ENCODE measurements at regions of chr19 and their contacts with region 1.

Region 1: DNA sequence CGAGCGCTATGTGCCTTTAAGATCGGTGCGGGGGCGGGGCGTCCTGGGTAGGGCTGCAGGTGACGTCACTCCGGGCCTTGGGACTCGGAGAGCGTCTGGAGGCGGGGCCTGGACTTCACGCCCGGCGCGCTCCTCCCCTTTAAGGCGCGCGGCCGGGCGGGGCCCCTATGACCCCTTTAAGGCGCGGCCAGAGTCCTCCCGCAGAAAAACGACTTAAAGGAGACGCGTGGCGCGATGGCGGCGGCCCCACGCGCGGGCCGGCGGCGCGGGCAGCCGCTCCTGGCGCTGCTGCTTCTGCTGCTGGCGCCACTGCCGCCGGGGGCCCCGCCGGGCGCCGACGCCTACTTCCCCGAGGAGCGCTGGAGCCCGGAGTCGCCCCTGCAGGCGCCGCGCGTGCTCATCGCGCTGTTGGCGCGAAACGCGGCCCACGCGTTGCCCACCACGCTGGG is at the start of gene COLGALT1:
- DNase-seq: peak; percentile 94
- H3K4me3 ChIP-seq: peak within 1 kb of the TSS; percentile 88 to 92 (median 89)
- H3K27ac ChIP-seq: peak within 1 kb of the TSS; percentile 88
- H3K4me1 ChIP-seq: peaks cover 41% of the 10 kb centered on the region
- H3K27me3 ChIP-seq: no peaks in the 10 kb centered on the region
- CTCF ChIP-seq: no peak
- POLR2A ChIP-seq: peak; percentile 71
- total RNA-seq, gene COLGALT1: 240 and 263 TPM in 2 replicates

Region 2: GRCh38 chr19:17021793-17022583 is 533.5 kb before region 1 on chr19:
- CTCF ChIA-PET with region 1: no interaction called
- POLR2A ChIA-PET with region 1: no interaction called
- dilution Hi-C with region 1: no loop called
- intact Hi-C with region 1: no loop called
- DNase-seq: peak; percentile 60
- H3K4me3 ChIP-seq: no peak overlapping the region
- H3K27ac ChIP-seq: no peak overlapping the region
- H3K4me1 ChIP-seq: peaks cover 4% of the 10 kb centered on the region
- H3K27me3 ChIP-seq: peaks cover 12 to 17% of the 10 kb centered on the region in 2 experiments
- CTCF ChIP-seq: no peak
- POLR2A ChIP-seq: no peak

Region 3: DNA sequence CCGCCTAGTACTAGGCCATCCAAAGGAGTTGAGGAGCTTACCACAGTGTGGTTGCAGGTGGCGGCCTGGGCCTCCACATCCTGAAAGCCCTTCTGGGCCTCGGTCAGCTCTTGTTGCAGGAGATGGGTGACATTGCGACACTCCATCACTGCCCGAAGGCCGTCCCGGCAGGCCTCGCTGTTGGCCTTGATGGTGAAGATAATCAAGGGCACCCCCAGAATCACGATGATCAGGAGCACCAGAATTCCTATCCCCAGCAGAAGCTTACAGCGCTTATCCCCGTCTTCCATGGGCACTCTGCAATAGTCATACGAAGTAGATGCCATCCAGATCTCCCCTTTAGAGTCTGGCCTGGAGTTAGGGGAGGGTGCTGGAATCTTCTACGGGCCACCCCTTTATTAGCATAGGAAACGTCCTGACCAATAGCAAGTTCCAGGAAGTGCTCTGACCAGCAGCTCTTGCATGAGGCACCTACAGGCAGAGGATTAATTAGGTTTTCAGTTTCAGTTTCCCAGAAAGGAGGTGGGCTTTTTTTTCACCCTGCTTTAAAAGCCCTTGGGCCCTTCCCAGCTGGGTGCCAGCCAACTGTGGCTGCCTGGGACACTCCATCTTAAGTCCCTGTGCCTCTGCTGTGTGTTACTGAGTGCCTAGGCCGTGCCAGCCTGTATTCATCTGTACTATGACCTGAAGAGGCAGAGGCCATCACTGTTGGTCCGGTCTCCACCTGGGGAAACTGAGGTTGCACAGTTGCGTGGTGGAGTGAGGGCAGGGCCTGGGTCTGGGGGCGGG is 150.1 kb before region 1 on chr19 and contains the start of gene BST2:
- CTCF ChIA-PET with region 1: no interaction called
- POLR2A ChIA-PET with region 1: no interaction called
- dilution Hi-C with region 1: no loop called
- intact Hi-C with region 1: loop called (anchors 10 kb)
- DNase-seq: peak; percentile 84
- H3K4me3 ChIP-seq: peak within 1 kb of the TSS in 2 of 3 experiments; percentile 20 to 44
- H3K27ac ChIP-seq: peak within 1 kb of the TSS; percentile 7
- H3K4me1 ChIP-seq: peaks cover 22% of the 10 kb centered on the region
- H3K27me3 ChIP-seq: no peaks in the 10 kb centered on the region
- CTCF ChIP-seq: no peak
- POLR2A ChIP-seq: peak; percentile 70
- total RNA-seq, gene BST2: 20.7 and 21.2 TPM in 2 replicates

Region 4: DNA sequence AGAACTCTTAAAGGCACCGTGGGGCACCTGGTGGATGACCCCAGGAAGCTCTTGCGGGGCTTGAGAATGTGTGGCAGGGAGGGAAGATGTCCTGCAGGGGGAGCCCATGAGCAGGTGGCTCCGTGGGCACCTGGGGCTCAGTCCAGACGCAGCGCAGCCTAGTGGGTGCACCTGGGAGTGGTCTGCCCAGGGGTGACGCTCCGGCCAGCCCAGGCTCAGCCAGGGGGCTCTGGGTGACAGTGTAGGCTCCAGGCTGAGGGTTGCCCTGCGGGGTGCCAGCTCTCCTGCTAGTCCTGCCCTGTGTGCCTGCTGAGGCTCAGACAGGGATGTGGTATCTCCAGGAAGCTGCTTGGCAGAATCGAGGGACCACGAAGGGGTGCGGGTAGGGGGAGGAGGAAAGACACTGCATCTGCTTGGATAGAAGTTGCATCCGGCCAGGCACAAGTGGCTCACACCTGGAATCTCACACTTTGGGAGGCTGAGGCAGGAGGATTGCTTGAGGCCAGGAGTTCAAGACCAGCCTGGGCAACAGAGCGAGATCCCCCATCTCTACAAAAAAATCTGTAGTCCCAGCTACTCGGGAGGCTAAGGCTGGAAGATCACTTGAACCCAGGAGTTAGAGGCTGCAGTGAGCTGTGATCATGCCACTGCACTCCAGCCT is 59.0 kb before region 1 on chr19:
- CTCF ChIA-PET with region 1: interaction called, 19 read pairs
- POLR2A ChIA-PET with region 1: interaction called, 6 read pairs
- dilution Hi-C with region 1: no loop called
- intact Hi-C with region 1: no loop called
- DNase-seq: peak; percentile 81
- H3K4me3 ChIP-seq: no peak overlapping the region
- H3K27ac ChIP-seq: no peak overlapping the region
- H3K4me1 ChIP-seq: peaks cover 12% of the 10 kb centered on the region
- H3K27me3 ChIP-seq: no peaks in the 10 kb centered on the region
- CTCF ChIP-seq: peak; percentile 99
- POLR2A ChIP-seq: no peak

Region 5: DNA sequence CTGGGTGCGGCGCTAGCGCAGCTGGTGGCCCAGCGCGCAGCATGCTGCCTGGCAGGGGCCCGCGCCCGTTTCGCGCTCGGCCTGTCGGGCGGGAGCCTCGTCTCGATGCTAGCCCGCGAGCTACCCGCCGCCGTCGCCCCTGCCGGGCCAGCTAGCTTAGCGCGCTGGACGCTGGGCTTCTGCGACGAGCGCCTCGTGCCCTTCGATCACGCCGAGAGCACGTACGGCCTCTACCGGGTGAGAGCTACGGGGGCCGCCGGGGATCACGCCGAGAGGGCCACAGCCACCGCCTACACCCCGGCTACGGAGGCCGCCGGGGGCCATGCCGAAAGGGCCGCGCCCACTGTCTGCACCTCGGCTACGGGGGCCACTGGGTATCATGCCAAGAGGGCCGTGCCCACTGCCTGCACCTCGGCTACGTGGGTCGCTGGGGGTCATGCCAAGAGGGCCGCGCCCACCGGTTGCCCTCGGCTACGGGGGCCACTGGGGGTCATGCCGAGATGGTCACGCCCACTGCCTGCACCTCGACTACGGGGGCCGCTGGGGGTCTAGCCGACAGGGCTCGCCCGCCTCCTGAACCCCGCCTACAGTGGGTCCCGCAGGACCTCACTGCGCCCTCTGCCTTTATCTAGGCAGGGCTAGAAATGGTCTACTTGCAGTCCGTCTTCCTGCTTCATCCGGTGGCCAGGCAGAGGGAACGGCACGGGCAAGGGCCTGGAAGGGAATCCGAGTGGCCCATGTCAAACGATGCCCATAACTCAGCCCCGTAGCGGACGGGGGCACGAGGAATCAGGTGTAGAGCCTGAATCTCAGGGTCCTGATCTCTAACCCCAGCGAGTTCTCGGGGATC is 43.6 kb before region 1 on chr19:
- CTCF ChIA-PET with region 1: interaction called, 7 read pairs
- POLR2A ChIA-PET with region 1: interaction called, 8 read pairs
- dilution Hi-C with region 1: no loop called
- intact Hi-C with region 1: loop called (anchors 1 kb)
- DNase-seq: peak; percentile 84
- H3K4me3 ChIP-seq: peak overlapping the region; percentile 81 to 82 (median 81)
- H3K27ac ChIP-seq: peak overlapping the region; percentile 69
- H3K4me1 ChIP-seq: peaks cover 13% of the 10 kb centered on the region
- H3K27me3 ChIP-seq: no peaks in the 10 kb centered on the region
- CTCF ChIP-seq: peak in 1 of 2 donors; percentile 14
- POLR2A ChIP-seq: no peak

Region 6: GRCh38 chr19:17539238-17540117 is 16.0 kb before region 1 on chr19:
- CTCF ChIA-PET with region 1: interaction called, 12 read pairs
- POLR2A ChIA-PET with region 1: no interaction called
- dilution Hi-C with region 1: no loop called
- intact Hi-C with region 1: loop called (anchors 1 kb)
- DNase-seq: peak; percentile 93
- H3K4me3 ChIP-seq: peak overlapping the region in 2 of 3 experiments; percentile 6 to 38
- H3K27ac ChIP-seq: no peak overlapping the region
- H3K4me1 ChIP-seq: peaks cover 7% of the 10 kb centered on the region
- H3K27me3 ChIP-seq: no peaks in the 10 kb centered on the region
- CTCF ChIP-seq: peak in 1 of 2 donors; percentile 67
- POLR2A ChIP-seq: no peak

Region 7: DNA sequence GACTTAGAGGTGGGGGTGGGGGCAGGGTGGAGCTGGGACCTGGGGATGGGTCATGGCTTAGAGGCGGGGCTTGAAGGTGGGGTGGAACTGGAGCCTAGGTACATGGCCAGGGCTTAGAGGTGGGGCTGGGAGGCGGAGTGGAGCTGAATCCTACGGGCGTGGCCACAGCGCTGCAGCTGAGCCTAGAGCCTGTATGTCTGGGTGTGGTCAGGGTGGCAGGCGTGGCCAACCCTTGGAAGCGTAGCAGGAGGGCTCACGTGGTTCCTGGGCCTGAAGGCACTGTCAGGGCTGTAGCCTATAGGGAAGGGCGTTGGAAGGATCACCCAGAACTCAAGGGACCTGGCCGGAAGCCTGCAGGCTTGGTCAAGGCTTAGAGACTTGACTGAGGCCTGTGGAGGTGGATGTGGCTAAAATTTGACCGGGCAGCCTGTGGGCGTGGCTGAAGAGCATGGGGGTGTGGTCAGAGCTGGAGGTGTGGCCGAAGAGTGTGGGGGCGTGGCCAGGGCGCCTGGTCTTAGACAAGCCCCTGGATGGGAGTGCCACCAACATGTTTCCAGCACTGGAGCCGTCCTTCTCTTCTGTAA is 24.2 kb after region 1 on chr19:
- CTCF ChIA-PET with region 1: no interaction called
- POLR2A ChIA-PET with region 1: no interaction called
- dilution Hi-C with region 1: no loop called
- intact Hi-C with region 1: loop called (anchors 1 kb)
- DNase-seq: peak; percentile 39
- H3K4me3 ChIP-seq: no peak overlapping the region
- H3K27ac ChIP-seq: no peak overlapping the region
- H3K4me1 ChIP-seq: no peaks in the 10 kb centered on the region
- H3K27me3 ChIP-seq: no peaks in the 10 kb centered on the region
- CTCF ChIP-seq: no peak
- POLR2A ChIP-seq: no peak

Region 8: GRCh38 chr19:17680235-17680722 is 124.8 kb after region 1 on chr19:
- CTCF ChIA-PET with region 1: no interaction called
- POLR2A ChIA-PET with region 1: no interaction called
- dilution Hi-C with region 1: no loop called
- intact Hi-C with region 1: no loop called
- DNase-seq: peak; percentile 74
- H3K4me3 ChIP-seq: no peak overlapping the region
- H3K27ac ChIP-seq: no peak overlapping the region
- H3K4me1 ChIP-seq: peaks cover 16% of the 10 kb centered on the region
- H3K27me3 ChIP-seq: peaks cover 0 to 4% of the 10 kb centered on the region in 2 experiments
- CTCF ChIP-seq: no peak
- POLR2A ChIP-seq: no peak